PC-9 (cell line): ENCODE measurements at regions of chr12 and their contacts with region 1.

Region 1: DNA sequence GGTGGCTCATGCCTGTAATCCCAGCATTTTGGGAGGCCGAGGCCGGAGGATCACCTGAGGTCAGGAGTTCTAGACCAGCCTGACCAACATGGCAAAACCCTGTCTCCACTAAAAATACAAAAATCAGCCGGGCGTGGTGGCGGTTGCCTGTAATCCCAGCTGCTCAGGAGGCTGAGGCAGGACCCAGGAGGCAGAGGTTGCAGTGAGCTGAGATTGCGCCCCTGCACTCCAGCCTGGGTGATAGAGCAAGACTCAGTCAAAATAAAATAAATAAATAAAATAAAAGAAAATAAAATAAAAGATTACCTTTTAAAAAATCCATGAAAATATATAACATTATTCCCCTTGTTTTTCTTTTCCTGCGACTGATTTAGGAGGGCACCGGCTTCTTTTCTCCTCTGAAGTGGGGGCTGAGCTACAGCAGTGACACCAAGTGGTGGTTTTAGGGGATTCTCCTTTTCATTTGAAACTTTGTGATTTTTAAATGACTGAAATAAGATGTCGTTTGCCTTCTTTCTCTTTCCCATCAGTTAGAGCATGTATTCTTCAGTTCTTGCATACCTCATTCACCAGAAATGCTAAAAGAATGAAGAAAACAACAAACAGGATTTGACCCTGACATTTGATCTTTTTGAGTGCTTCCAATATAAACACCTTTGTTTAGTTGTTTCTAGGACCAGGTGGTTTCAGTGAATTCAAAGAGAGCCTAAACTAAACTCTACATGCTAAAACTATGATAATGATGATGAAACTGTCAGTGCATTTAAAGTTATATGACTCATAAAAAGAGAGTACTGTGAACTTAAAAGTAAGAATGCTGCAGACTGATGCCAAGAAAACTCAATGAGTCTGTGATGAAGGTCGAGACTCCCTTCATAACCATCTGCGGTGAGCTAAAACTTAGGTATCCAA is 22.6 kb upstream of the PKP2 start:
- DNase-seq: peak in 1 of 2 experiments; percentile 63
- H3K4me3 ChIP-seq: no peak overlapping the region
- H3K27ac ChIP-seq: peak overlapping the region; percentile 45; the same call in 1 of the 2 replicates
- H3K4me1 ChIP-seq: peaks cover 45% of the 10 kb centered on the region
- H3K27me3 ChIP-seq: no peaks in the 10 kb centered on the region
- CTCF ChIP-seq: peak; percentile 60

Region 2: DNA sequence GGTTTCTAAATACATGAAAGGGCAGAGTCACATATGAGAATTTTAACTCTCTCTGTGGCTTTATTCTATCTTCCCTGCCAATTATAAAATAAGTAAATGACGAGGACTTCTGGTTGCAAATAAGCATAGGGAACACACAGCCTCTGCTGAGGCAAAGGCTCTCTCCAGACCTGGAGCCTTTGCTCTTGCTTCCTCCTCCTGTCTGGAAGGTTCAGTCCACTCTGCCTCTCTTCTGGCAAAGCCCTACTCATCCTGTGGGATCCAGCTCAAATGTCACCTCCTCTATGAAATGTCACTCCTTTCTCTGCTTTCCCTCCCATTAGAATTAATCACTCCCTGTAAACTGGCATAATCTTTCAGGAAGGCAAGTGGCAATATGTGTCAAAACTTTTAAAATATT is 64.4 kb before region 1 on chr12:
- CTCF ChIA-PET with region 1: no interaction called
- POLR2A ChIA-PET with region 1: no interaction called
- intact Hi-C with region 1: loop called (anchors 5 kb)
- DNase-seq: no peak
- H3K4me3 ChIP-seq: no peak overlapping the region
- H3K27ac ChIP-seq: no peak overlapping the region
- H3K4me1 ChIP-seq: no peaks in the 10 kb centered on the region
- H3K27me3 ChIP-seq: no peaks in the 10 kb centered on the region
- CTCF ChIP-seq: no peak

Region 3: DNA sequence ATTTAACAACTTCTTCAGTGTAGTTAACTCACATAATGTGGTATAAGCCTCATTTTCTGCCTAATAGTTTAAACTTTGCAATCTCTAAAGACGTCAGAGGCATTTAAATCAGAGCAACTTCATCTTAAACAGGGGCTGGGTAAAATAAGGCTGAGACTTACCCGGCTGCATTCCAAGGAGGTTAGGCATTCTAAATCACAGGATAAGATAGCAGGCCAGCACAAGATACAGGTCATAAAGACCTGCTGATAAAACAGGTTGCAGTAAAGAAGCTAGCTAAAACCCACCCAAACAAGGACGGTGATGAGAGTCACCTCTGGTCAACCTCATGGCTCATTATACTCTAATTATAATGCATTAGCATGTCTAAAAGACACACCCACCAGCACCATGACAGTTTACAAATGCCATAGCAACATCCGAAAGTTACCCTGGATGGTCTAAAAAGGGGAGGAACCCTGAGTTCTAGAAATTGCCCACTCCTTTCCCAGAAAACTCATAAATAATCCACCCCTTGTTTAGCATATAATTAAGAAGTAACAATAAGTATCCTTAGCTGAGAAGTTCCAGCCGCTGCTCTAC is 93.2 kb after region 1 on chr12:
- CTCF ChIA-PET with region 1: no interaction called
- POLR2A ChIA-PET with region 1: no interaction called
- intact Hi-C with region 1: no loop called
- DNase-seq: peak; percentile 63 to 86
- H3K4me3 ChIP-seq: peak overlapping the region; percentile 30; the same call in 1 of the 2 replicates
- H3K27ac ChIP-seq: peak overlapping the region; percentile 37
- H3K4me1 ChIP-seq: peaks cover 17% of the 10 kb centered on the region
- H3K27me3 ChIP-seq: no peaks in the 10 kb centered on the region
- CTCF ChIP-seq: no peak